ENCODE measurements at regions of chr19 and their contacts with region 1.

Region 1: DNA sequence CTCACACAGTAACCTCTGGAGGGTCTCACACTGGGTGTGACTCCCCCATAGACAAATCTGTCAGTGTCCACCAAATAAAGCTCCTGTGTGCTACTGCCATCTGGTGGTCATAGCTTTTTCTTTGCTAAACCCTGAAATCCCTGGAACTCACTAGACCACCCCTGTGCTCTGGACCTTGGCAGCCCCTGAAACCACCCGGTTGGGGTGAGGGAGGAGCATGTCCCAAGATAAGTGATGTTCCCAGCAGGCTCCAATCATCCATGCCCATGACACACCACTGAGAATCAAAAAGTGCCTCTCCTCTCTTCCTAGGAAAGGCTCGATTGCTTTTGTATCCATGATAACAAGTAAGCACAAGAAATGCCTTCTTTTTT is 6.5 kb upstream of the HSD17B14 start:
- DNase-seq: peak; percentile 46
- ATAC-seq: peak; percentile 79
- H3K4me3 ChIP-seq: no peak overlapping the region
- H3K27ac ChIP-seq: no peak overlapping the region
- H3K4me1 ChIP-seq: peaks cover 0 to 5% of the 10 kb centered on the region in 2 experiments; a peak in 1 of 4 replicates
- H3K27me3 ChIP-seq: no peaks in the 10 kb centered on the region
- CTCF ChIP-seq: peak; percentile 60 to 90 (median 75)
- POLR2A ChIP-seq: no peak
- RAD21 ChIP-seq: peak; percentile 73

Region 2: DNA sequence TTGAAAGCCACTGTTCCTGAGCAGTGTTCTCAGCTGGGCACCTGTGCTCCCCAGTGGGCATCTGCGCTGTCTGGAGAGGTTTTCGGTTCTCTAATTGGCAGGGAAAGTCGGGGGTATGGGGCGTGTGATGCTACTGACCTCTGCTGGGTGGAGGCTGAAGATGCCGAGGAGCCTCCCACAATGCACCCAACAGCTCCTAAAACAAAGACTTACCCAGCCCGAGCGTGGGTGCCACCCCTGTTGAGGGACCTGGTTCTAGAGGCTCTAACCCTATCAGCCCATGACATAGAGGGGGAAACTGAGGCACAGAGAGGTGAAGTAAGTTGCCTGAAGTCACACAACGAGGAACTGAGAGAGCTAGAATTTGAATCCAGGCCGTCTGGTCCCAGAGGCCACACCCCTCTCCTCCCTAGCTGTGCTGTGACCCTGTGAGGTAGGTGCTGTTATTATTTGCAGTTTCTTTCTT is 233.9 kb before region 1 on chr19:
- CTCF ChIA-PET with region 1: no interaction called
- POLR2A ChIA-PET with region 1: no interaction called
- RAD21 ChIA-PET with region 1: no interaction called
- intact Hi-C with region 1: no loop called
- DNase-seq: peak; percentile 66
- ATAC-seq: peak; percentile 92
- H3K4me3 ChIP-seq: peak overlapping the region; percentile 22 to 50
- H3K27ac ChIP-seq: peak overlapping the region; percentile 10; the same call in 1 of the 2 replicates
- H3K4me1 ChIP-seq: peaks cover 5 to 13% of the 10 kb centered on the region in 2 experiments; a peak in 3 of 4 replicates
- H3K27me3 ChIP-seq: no peaks in the 10 kb centered on the region
- CTCF ChIP-seq: peak; percentile 77 to 80 (median 77)
- POLR2A ChIP-seq: no peak
- RAD21 ChIP-seq: peak; percentile 92

Region 3: GRCh38 chr19:48646001-48646721 is 196.6 kb before region 1 on chr19 and contains the start of gene CA11:
- CTCF ChIA-PET with region 1: interaction called, 14 read pairs
- POLR2A ChIA-PET with region 1: interaction called, 3 read pairs
- RAD21 ChIA-PET with region 1: interaction called, 3 to 5 read pairs
- intact Hi-C with region 1: loop called (anchors 2 kb)
- DNase-seq: peak; percentile 77
- ATAC-seq: peak; percentile 83
- H3K4me3 ChIP-seq: peak within 1 kb of the TSS; percentile 55 to 58
- H3K27ac ChIP-seq: peak within 1 kb of the TSS; percentile 83
- H3K4me1 ChIP-seq: peaks cover 19 to 52% of the 10 kb centered on the region in 2 experiments
- H3K27me3 ChIP-seq: no peaks in the 10 kb centered on the region
- CTCF ChIP-seq: peak in 2 of 3 experiments; percentile 83 to 91; a peak in 5 of 6 replicates
- POLR2A ChIP-seq: no peak
- RAD21 ChIP-seq: peak; percentile 95
- total RNA-seq, gene CA11: 29.6 TPM

Region 4: DNA sequence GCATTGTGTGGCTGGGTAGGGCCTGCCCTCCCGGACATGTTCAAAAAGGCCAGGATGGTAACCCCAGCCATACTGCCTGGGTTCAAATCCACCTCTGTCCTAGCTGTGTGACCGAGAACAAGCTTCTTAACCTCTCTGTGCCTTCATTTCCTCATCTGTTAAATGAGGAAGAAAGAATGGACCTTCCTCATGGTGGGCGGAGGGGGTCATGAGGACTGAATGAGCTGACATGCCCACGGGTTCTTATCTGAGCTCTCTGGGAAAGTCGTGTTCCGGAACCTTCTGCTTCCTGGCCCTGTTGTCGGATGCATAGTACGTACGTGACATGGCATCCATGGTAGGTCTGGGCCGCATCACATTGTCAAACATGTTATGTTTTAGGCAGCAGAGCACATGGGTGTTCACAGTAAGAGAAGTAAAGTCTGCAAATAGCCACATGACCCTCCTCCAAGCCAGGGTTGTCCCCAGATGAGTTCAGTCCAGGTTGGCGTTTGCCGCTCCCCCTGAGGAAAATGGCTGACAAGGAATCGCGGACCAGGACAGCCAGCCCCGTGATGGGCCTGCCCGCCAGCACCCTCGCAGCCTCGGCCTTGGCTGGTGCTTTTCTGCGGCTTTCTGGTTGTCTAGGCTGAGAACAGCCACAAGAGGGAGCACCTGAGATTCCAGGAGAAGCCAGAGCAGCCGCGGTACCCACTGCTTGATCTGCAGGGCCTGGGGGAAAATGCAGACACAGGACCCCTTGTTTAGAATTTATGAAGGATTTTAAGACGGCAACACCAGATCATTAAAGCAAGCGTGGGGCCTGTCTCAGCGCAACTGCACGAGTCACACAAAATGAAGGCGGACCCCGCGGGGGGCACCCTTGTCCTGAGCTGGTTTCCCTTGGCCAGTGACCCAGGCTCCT is 167.6 kb before region 1 on chr19:
- CTCF ChIA-PET with region 1: no interaction called
- POLR2A ChIA-PET with region 1: no interaction called
- RAD21 ChIA-PET with region 1: no interaction called
- intact Hi-C with region 1: no loop called
- DNase-seq: peak; percentile 76
- ATAC-seq: peak; percentile 90
- H3K4me3 ChIP-seq: no peak overlapping the region
- H3K27ac ChIP-seq: peak overlapping the region; percentile 9; the same call in 1 of the 2 replicates
- H3K4me1 ChIP-seq: peaks cover 13 to 25% of the 10 kb centered on the region in 2 experiments
- H3K27me3 ChIP-seq: no peaks in the 10 kb centered on the region
- CTCF ChIP-seq: peak; percentile 85 to 90 (median 89)
- POLR2A ChIP-seq: no peak
- RAD21 ChIP-seq: peak; percentile 91

Region 5: DNA sequence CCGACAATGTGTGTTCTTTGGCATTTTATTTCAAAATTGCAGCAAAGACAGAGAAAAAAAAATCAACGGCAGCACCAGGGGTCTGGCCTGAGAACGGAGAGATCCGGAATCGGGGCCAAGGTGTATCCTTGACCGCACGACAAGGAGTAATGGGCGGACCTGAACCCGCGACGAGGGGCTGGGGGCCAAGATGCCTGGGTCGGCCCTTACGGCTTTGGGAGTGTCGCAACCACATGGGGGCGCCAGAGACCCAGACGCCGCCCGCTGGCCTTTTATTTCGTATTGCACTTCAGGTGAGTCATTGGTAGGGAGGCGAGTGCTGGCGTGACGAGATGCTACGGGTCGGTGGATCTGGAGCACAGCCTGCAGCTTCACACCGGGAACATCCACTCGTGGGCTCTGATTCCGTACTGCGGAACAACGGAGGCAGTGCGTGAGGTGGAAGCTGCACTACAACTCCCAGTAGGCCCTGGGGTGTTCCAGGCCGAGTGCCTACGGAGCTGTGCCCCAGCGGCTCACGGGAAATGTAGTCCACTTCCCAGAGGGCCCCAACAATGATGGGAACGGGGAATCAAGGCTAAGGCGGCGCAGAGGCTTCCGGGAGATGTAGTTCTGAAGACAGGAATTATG is 47.6 kb before region 1 on chr19:
- CTCF ChIA-PET with region 1: interaction called, 49 read pairs
- POLR2A ChIA-PET with region 1: interaction called, 6 read pairs
- RAD21 ChIA-PET with region 1: interaction called in 1 of 2 experiments, 6 read pairs
- intact Hi-C with region 1: no loop called
- DNase-seq: peak; percentile 81
- ATAC-seq: peak; percentile 99
- H3K4me3 ChIP-seq: peak overlapping the region; percentile 10 to 27; a peak in 3 of 4 replicates
- H3K27ac ChIP-seq: peak overlapping the region; percentile 41
- H3K4me1 ChIP-seq: peaks cover 0 to 11% of the 10 kb centered on the region in 2 experiments; a peak in 1 of 4 replicates
- H3K27me3 ChIP-seq: no peaks in the 10 kb centered on the region
- CTCF ChIP-seq: peak; percentile 93 to 96 (median 93)
- POLR2A ChIP-seq: no peak
- RAD21 ChIP-seq: peak; percentile 99

Region 6: GRCh38 chr19:48826606-48827020 is 16.2 kb before region 1 on chr19:
- CTCF ChIA-PET with region 1: interaction called, 14 read pairs
- POLR2A ChIA-PET with region 1: no interaction called
- RAD21 ChIA-PET with region 1: no interaction called
- intact Hi-C with region 1: no loop called
- DNase-seq: no peak
- ATAC-seq: peak; percentile 38
- H3K4me3 ChIP-seq: no peak overlapping the region
- H3K27ac ChIP-seq: no peak overlapping the region
- H3K4me1 ChIP-seq: no peaks in the 10 kb centered on the region
- H3K27me3 ChIP-seq: no peaks in the 10 kb centered on the region
- CTCF ChIP-seq: peak in 2 of 3 experiments; percentile 38 to 44; a peak in 4 of 6 replicates
- POLR2A ChIP-seq: no peak
- RAD21 ChIP-seq: peak; percentile 36

Region 7: GRCh38 chr19:48970923-48971395 is 128.2 kb after region 1 on chr19:
- CTCF ChIA-PET with region 1: interaction called, 18 read pairs
- POLR2A ChIA-PET with region 1: interaction called, 5 read pairs
- RAD21 ChIA-PET with region 1: no interaction called
- intact Hi-C with region 1: no loop called
- DNase-seq: no peak
- ATAC-seq: peak; percentile 71
- H3K4me3 ChIP-seq: no peak overlapping the region
- H3K27ac ChIP-seq: no peak overlapping the region
- H3K4me1 ChIP-seq: peaks cover 0 to 22% of the 10 kb centered on the region in 2 experiments; a peak in 3 of 4 replicates
- H3K27me3 ChIP-seq: no peaks in the 10 kb centered on the region
- CTCF ChIP-seq: peak in 2 of 3 experiments; percentile 94 to 95; a peak in 4 of 6 replicates
- POLR2A ChIP-seq: no peak
- RAD21 ChIP-seq: peak; percentile 88